MCF 10A (cell line): ENCODE measurements at regions of chr12 and their contacts with region 1.

Region 1: DNA sequence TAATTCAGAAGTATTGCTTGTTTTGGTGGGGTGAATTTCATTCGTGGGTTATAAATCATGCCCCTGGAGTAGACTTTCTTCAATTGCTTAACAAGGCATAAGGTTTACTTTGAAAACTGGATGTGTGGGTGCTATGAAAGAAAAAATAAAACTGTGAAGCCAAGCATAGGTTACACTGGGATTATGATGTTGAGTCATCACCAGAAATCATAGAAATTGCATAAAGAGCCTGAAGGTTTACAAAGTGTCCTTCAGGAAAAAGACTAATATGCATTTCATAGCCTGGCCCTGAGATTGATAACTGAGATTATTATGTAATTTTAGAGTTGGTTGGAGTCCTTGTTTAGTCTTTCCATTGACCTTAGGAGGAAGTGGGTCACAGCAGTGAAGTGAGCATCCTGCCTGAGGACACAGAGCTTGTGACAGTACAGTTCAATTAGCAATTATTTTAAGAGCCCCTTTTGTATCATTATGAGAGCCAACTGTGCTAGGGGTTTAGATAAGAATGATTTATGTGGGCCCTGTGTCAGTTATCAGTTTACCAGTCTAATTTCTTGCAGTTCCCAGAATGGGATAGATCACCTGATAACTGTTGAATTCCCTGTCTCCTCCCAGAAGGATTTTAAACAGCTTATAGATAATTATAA is 13.6 kb downstream of the LRRK2 start:
- DNase-seq: peak; percentile 54
- H3K4me3 Mint-ChIP-seq: no peak overlapping the region
- H3K27ac Mint-ChIP-seq: no peak overlapping the region
- H3K4me1 Mint-ChIP-seq: peaks cover 7% of the 10 kb centered on the region
- H3K27me3 Mint-ChIP-seq: no peaks in the 10 kb centered on the region
- CTCF ChIP-seq: no peak

Region 2: DNA sequence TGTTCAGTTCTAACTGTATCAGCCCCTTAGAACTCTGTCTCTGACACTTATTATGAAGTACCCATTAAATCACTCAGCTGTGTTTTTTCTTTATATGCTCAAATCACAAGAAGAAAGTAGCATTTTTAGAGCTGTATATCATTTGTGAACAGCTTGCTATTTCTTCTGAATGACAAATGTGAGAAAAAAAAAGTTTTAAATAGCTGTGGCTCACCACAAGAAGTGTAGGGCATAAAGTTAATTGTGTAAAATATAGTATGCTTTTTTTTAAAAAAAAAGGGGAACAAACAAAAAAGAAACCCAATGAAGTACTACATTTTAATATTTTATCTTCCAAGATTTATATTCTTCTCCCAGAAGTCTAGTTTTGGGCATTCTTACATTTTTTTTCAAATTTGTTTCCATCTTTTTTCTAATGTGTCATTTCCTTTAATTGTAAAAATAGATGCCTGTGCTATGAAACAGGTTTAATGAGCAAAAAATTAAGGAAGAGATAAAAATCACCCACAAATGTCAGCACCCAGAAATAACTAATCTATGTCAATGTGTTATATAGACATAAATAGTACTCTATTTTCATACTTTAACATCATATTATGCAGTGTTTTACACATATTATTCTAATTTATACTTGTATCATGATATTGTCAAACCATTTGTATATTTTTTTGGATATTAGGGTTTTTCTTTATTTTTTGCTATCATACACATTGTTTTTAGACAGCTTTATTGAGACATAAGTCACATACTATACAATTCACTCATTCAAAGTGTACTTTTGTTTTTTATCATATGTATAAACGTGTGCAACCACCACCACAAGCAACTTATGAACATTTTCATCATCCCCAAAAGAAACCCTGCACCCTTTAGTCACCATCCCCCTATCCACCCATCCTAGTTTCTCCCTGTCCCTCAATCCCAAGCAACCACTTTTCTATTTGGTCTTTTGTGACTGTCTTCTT is 36.0 kb before region 1 on chr12:
- CTCF ChIA-PET with region 1: no interaction called
- POLR2A ChIA-PET with region 1: no interaction called
- intact Hi-C with region 1: no loop called
- DNase-seq: no peak
- H3K4me3 Mint-ChIP-seq: no peak overlapping the region
- H3K27ac Mint-ChIP-seq: no peak overlapping the region
- H3K4me1 Mint-ChIP-seq: peaks cover 3% of the 10 kb centered on the region
- H3K27me3 Mint-ChIP-seq: no peaks in the 10 kb centered on the region
- CTCF ChIP-seq: no peak

Region 3: DNA sequence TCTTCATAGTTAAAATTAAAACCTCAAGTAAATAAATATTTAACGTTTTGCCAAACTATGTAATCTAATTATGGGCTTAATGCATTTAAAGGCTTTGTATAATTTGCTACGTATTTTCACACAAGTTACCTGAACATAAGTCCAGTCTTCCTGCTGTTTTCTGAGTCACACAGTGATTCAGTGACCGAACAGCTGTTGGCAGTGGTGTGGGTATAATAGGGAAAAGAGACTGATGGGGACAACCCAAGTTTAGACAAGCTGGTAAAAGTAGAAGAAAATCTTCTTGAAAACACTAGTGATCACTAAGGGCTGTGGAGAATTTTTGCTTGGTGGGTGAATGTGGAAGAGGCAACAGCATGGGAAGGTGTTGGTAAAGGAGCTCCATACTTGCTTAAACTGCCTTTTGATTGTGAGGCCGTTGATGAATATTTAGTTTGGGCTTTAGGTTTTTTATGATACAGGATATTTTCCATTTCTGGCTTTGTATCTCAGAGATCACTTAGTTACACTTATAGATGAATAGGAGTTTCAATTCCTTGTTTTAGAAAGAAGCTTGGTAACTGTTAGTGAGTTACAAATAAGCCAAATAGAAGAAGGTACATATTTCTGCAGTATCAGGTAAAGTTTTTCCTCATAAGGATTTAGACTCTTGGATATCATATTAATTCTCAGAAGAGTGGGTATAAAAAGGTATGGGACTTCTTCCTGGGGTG is 10.4 kb after region 1 on chr12:
- CTCF ChIA-PET with region 1: no interaction called
- POLR2A ChIA-PET with region 1: interaction called, 10 read pairs
- intact Hi-C with region 1: no loop called
- DNase-seq: peak; percentile 66
- H3K4me3 Mint-ChIP-seq: no peak overlapping the region
- H3K27ac Mint-ChIP-seq: no peak overlapping the region
- H3K4me1 Mint-ChIP-seq: peaks cover 6% of the 10 kb centered on the region
- H3K27me3 Mint-ChIP-seq: no peaks in the 10 kb centered on the region
- CTCF ChIP-seq: no peak